ENCODE measurements at regions of chrX and their contacts with region 1.

Region 1: DNA sequence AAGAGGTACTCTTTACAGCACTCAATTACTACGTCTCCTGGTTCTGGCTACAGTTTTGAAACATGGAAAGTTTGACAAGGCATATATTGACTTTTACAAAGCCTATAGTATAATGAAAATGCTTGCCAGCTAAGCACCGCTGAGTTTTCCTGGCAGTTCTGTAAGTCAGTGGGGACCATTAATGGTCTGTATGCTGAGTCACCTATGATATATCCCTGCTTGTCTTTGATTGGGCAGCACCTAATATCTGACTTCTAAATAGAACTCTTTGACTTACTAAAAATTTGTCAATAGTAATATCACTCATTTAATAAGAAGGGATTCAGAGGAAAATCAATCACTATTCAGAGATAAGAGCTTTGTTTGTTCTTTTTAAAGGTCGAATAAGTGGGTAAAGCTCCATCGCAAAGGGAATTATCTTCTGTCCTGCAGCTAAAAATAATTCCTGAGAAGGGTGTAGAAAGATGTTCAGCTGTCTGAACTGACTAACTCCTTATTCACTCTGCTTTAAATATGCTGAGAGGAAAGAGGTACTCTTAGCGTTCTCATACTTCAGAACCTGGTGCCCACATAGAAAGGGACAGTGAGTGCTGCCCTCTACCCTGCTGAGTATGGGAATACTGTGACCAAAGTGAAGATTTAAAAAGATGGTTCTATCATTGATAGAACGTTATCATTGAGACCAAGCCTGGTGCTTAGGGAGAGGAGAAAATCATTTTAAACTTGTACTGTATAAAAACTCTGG is 959 bp downstream of the SMPX start:
- DNase-seq: peak; percentile 12 to 46
- ATAC-seq: peak; percentile 81 to 95
- H3K4me3 ChIP-seq: peak overlapping the region; percentile 43 to 53 (median 48)
- H3K27ac ChIP-seq: peak overlapping the region; percentile 79 to 92 (median 86)
- H3K4me1 ChIP-seq: peaks cover 1 to 18% of the 10 kb centered on the region in 2 donors
- H3K27me3 ChIP-seq: no peaks in the 10 kb centered on the region
- CTCF ChIP-seq: peak in 3 of 5 experiments; percentile 4 to 30 (median 17)
- POLR2A ChIP-seq: peak; percentile 36 to 71

Region 2: DNA sequence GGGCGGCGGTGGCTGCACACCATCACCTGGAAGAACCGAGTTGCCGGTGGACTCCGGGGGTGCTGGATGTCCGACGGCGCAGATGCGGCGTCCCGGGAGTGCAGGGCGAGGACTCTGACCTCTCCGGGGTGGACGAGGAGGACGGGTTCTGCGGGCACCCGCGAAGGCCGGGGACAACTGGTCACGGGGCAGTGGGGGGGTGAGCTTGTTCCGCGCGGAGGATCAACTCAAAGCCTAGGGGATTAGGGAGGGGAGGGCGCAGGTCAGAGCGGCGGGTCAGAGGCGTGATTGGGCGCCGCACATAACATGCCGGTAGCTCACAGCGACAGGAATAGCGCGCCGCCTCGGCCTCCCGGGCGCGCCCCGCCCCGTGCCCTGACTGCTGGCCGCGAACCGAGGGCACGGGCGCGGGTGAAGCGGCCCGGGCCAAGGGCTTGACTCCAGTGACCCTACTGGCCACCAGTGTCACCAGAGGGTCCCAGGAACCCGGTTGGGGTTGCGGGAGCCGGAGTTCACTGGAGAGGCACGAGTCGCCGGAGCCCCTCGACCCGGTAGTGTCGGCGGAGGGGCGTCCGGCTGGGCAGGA is 98.7 kb before region 1 on chrX and contains the start of gene KLHL34:
- in situ Hi-C with region 1: no loop called
- intact Hi-C with region 1: loop called (anchors 5 kb)
- DNase-seq: peak; percentile 43 to 74
- ATAC-seq: peak; percentile 72 to 73
- H3K4me3 ChIP-seq: peak within 1 kb of the TSS; percentile 48 to 57 (median 54)
- H3K27ac ChIP-seq: peak within 1 kb of the TSS; percentile 92 to 95 (median 93)
- H3K4me1 ChIP-seq: peaks cover 0 to 20% of the 10 kb centered on the region in 2 donors
- H3K27me3 ChIP-seq: no peaks in the 10 kb centered on the region
- CTCF ChIP-seq: no peak
- POLR2A ChIP-seq: peak; percentile 45 to 66
- total RNA-seq, gene KLHL34: 2.2 to 6.2 (median 3.4) TPM

Region 3: GRCh38 chrX:21711129-21711847 is 45.7 kb before region 1 on chrX:
- in situ Hi-C with region 1: no loop called
- intact Hi-C with region 1: loop called (anchors 5 kb)
- DNase-seq: peak; percentile 20 to 47
- ATAC-seq: peak; percentile 85 to 89
- H3K4me3 ChIP-seq: no peak overlapping the region
- H3K27ac ChIP-seq: peak overlapping the region; percentile 69 to 79 (median 70)
- H3K4me1 ChIP-seq: peaks cover 2 to 8% of the 10 kb centered on the region in 2 donors
- H3K27me3 ChIP-seq: no peaks in the 10 kb centered on the region
- CTCF ChIP-seq: no peak
- POLR2A ChIP-seq: peak in 1 of 2 donors; percentile 9

Region 4: GRCh38 chrX:21778236-21778635 is 21.3 kb after region 1 on chrX:
- in situ Hi-C with region 1: no loop called
- intact Hi-C with region 1: loop called (anchors 2 kb)
- DNase-seq: no peak
- ATAC-seq: no peak
- H3K4me3 ChIP-seq: no peak overlapping the region
- H3K27ac ChIP-seq: peak overlapping the region in 2 of 4 donors; percentile 70 to 76
- H3K4me1 ChIP-seq: peaks cover 8 to 27% of the 10 kb centered on the region in 2 donors
- H3K27me3 ChIP-seq: no peaks in the 10 kb centered on the region
- CTCF ChIP-seq: no peak
- POLR2A ChIP-seq: no peak

Region 5: GRCh38 chrX:21798677-21799219 is 41.8 kb after region 1 on chrX:
- in situ Hi-C with region 1: no loop called
- intact Hi-C with region 1: loop called (anchors 2 kb)
- DNase-seq: peak in 1 of 2 donors; percentile 14
- ATAC-seq: peak; percentile 83 to 86
- H3K4me3 ChIP-seq: no peak overlapping the region
- H3K27ac ChIP-seq: peak overlapping the region; percentile 76 to 87 (median 80)
- H3K4me1 ChIP-seq: peaks cover 12 to 16% of the 10 kb centered on the region in 2 donors
- H3K27me3 ChIP-seq: no peaks in the 10 kb centered on the region
- CTCF ChIP-seq: peak in 1 of 5 experiments; percentile 15
- POLR2A ChIP-seq: no peak

Region 6: DNA sequence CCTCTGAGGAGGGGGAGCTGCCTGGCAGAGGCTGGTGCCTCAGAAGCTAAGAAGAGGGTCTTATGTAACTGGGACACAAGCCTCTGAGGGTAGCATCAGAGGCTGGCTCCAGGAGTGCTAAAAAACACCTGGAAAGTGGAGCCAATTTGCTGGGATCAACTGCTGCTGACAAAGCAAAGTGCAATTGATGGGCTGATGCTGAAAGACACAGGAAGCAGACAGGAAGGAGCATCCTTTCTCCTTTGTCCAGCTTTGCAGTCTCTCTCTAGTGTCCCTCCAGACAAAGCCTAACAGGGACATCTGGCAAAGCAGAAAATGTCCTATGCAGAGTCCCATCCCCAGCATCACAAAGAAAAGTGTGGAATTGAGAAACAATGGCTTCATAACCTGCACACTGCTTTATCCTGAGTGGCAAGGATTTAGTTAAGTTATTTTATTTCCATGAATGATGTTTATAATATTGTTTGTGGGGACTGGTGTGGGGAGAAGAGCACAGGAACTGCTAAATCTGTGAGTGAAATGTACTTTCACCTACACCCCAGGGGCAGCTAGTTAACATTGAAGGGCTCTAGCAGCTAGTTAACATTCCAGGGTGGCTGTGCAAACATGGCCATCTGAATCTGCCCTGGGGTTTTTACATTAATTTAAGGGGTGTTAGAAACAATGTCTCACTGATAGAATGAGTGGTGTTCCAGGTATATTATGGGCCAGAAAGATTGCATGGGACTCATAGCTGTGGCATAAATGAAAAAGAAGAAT is 56.8 kb after region 1 on chrX:
- in situ Hi-C with region 1: no loop called
- intact Hi-C with region 1: no loop called
- DNase-seq: no peak
- ATAC-seq: no peak
- H3K4me3 ChIP-seq: no peak overlapping the region
- H3K27ac ChIP-seq: no peak overlapping the region
- H3K4me1 ChIP-seq: no peaks in the 10 kb centered on the region
- H3K27me3 ChIP-seq: no peaks in the 10 kb centered on the region
- CTCF ChIP-seq: no peak
- POLR2A ChIP-seq: no peak

Region 7: DNA sequence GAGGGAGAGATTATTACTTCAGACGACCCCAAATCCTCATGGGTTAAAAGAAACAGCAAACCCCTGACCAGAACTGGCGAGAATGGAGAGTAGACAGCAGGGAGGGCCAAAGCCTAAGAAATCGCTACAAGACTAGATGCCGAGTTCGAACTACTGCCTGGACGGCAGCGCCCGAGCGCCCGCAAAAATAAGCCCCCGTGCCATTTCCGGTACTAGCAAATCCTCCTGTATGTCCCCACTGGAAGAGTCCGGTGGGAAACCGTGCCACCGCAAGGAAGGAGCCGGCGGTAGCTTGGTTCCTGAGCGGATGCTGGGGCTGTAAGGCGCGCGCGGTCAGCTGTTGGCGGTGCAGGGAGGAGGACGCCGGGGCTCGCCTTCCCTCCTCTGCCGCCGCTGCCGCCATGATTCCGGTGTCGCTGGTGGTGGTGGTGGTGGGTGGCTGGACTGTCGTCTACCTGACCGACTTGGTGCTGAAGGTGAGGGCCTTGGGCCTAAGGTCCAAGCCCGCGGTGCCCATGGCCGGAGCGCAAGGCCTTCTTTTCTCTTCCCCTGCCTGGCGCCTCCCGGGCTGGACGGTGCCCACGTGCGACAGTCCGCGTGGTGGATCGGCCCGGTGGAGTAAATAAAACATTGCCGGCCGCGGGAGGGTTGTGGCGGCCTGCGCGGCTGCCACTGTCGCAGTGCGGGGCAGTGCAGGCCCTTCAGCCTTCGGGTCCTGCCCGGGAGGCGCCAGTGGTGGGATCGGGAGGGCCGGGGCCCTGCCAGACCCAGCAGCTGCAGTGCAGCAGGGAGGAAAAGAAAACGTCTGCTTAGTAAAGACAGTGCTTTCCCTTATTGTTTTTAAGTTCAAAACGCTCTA is 82.6 kb after region 1 on chrX and contains the start of gene MBTPS2:
- in situ Hi-C with region 1: no loop called
- intact Hi-C with region 1: loop called (anchors 2 kb)
- DNase-seq: peak; percentile 66 to 79
- ATAC-seq: peak; percentile 97
- H3K4me3 ChIP-seq: peak within 1 kb of the TSS; percentile 67 to 79 (median 76)
- H3K27ac ChIP-seq: peak within 1 kb of the TSS; percentile 85 to 91 (median 86)
- H3K4me1 ChIP-seq: peaks cover 4 to 11% of the 10 kb centered on the region in 2 donors
- H3K27me3 ChIP-seq: no peaks in the 10 kb centered on the region
- CTCF ChIP-seq: peak in 1 of 5 experiments; percentile 3
- POLR2A ChIP-seq: peak; percentile 24 to 36
- total RNA-seq, gene MBTPS2: 4.5 to 11.3 (median 6.0) TPM

Region 8: GRCh38 chrX:23465105-23465791 is 1708.3 kb after region 1 on chrX:
- in situ Hi-C with region 1: no loop called
- intact Hi-C with region 1: no loop called
- DNase-seq: no peak
- ATAC-seq: no peak
- H3K4me3 ChIP-seq: no peak overlapping the region
- H3K27ac ChIP-seq: no peak overlapping the region
- H3K4me1 ChIP-seq: no peaks in the 10 kb centered on the region
- H3K27me3 ChIP-seq: no peaks in the 10 kb centered on the region
- CTCF ChIP-seq: no peak
- POLR2A ChIP-seq: no peak

Measured in gastrocnemius medialis (tissue), 4 donors.